Dendritic cell treated with granulocyte-macrophage colony-stimulating factor and Interleukin-4, amounts not matched to agents 40 ng/mL and 50 ng/mL, for 4 days (primary cell): ENCODE measurements at regions of chr3 and their contacts with region 1.

Region 1: GRCh38 chr3:42600111-42600988 is at the start of gene NKTR:
- H3K4me3 Mint-ChIP-seq: peak within 1 kb of the TSS; percentile 89
- H3K27ac Mint-ChIP-seq: peak within 1 kb of the TSS; percentile 99
- H3K4me1 Mint-ChIP-seq: peaks cover 22% of the 10 kb centered on the region
- H3K27me3 Mint-ChIP-seq: no peaks in the 10 kb centered on the region

Region 2: DNA sequence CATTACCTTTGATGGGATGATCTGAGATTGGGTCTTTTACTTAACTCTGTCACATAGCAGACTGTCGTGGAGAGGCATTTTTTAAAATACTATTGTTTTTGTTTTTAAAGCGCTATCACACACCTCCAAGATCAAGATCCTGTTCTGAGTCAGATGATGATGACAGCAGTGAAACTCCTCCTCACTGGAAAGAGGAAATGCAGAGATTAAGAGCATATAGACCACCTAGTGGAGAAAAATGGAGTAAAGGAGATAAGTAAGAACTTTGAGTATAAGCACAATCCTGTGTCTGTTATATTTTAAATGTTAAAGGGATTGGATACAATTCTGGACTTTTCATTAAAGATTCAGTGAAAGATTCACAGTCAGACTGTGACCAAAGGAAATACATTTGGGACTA is 34.8 kb after region 1 on chr3:
- intact Hi-C with region 1: loop called (anchors 2 kb)
- H3K4me3 Mint-ChIP-seq: no peak overlapping the region
- H3K27ac Mint-ChIP-seq: no peak overlapping the region
- H3K4me1 Mint-ChIP-seq: peaks cover 4% of the 10 kb centered on the region
- H3K27me3 Mint-ChIP-seq: no peaks in the 10 kb centered on the region